Activated CD8-positive, alpha-beta T cell treated with anti-CD3 and anti-CD28 coated beads, Interleukin-2, amount 10 ng/mL, durations not matched to agents 7 days and 5 days (primary cell): ENCODE measurements at regions of chr17 and their contacts with region 1.

Region 1: DNA sequence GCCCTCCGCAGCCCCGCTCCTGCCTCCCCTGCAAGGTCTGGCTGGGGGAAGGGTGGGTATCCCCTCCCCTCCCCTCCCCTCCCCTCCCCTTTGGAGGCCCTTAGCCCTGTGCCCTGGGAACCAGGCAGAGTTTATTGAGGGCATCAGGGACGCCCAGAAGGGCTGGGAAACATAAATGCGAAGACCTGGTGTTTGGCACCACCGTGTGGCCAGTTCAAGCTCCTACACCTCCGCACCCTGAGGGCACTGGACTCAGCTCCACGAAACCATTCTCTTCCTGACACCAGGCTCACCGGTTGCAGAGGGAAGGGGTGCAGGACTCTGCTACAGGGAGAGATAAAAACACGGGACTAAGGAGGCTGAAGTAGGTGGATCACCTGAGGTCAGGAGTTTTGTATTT is 1.0 kb upstream of the AIPL1 start:
- DNase-seq: peak; percentile 76
- ATAC-seq: peak; percentile 92
- H3K4me3 Mint-ChIP-seq: no peak overlapping the region
- H3K27ac Mint-ChIP-seq: no peak overlapping the region
- H3K4me1 Mint-ChIP-seq: no peaks in the 10 kb centered on the region
- H3K27me3 Mint-ChIP-seq: peaks cover 59% of the 10 kb centered on the region

Region 2: GRCh38 chr17:6346156-6346786 is 89.7 kb before region 1 on chr17:
- CTCF ChIA-PET with region 1: no interaction called
- POLR2A ChIA-PET with region 1: no interaction called
- DNase-seq: no peak
- ATAC-seq: no peak
- H3K4me3 Mint-ChIP-seq: no peak overlapping the region
- H3K27ac Mint-ChIP-seq: no peak overlapping the region
- H3K4me1 Mint-ChIP-seq: no peaks in the 10 kb centered on the region
- H3K27me3 Mint-ChIP-seq: peaks cover 3% of the 10 kb centered on the region

Region 3: DNA sequence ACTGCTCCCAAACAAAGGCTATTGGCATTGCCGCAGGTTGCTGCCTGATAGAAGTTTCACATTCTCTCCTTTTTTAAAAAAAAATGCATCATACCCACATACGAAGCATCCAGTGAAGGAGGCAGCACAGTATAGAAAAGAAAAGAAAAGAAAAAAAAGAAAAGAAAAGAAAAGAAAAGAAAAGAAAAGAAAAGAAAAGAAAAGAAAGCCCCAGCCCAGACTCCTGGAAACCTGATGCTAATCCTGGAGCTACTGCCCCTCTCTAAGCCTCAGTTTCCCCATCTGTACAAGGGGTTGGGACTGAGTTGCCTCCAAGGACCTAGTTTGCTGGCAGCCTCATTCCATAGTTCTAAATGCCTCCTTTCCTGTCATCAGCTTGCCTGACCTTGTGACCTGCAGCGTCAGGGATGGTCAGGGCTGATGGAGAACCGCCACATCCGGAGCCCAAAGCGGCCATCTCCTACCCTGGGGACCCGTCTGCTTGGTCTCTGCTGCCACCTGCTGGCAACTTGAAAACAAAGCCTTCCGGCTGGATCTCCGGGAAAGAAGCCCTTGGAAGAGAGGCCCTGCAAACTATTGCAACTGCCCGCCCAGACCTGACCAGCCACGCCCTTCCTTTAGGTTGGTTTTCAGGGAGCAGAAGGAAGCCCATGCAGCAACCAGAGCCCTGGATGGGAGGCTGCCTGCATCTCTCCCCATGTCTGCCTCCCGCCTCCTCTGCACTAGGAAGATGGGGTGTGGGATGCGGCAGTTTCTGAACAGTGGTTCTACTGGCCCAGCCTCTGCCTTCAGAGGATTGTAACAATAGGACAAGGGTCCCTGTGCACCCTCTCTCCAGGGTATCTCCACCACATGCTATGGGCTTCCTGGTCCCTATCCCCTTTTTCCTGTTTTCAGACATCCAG is 14.0 kb before region 1 on chr17:
- CTCF ChIA-PET with region 1: interaction called, 12 read pairs
- POLR2A ChIA-PET with region 1: no interaction called
- DNase-seq: peak; percentile 81
- ATAC-seq: peak; percentile 79
- H3K4me3 Mint-ChIP-seq: no peak overlapping the region
- H3K27ac Mint-ChIP-seq: no peak overlapping the region
- H3K4me1 Mint-ChIP-seq: peaks cover 5% of the 10 kb centered on the region
- H3K27me3 Mint-ChIP-seq: peaks cover 40% of the 10 kb centered on the region